Naive thymus-derived CD4-positive, alpha-beta T cell (primary cell): ENCODE measurements at regions of chr6 and their contacts with region 1.

Region 1: DNA sequence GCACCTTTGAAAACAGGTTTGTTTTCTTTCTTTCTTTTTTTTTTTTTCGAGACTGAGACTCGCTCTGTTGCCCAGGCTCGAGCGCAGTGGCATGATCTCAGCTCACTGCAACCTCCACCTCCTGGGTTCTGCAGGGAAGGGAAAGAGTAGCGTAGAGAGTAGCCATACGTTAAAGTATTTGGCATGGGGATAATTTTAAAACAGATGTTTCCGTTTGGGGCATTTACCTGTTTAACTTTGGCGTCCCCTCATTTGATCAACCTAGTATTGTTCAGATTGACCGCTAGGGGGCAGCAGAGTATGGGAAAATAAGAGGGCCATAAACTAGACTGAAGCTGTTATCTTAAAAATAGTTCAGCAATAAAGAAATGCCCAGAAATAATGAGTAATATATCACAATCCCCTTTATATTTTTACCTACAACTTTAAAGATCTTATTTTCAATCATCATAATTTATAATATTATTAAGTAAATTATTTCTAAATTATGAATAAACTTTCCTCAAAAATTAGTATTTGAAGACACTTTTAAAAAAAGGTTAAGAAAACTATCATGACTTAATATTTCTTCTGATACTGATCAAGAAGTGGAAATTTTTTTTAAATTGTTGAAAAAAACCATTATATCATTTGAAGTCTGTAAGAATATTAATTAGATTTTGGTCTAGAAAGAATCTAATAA is 7.6 kb upstream of the TAAR9 start:
- DNase-seq: peak; percentile 26 to 70 (median 54)
- ATAC-seq: peak; percentile 85
- H3K4me3 ChIP-seq: no peak overlapping the region
- H3K4me3 Mint-ChIP-seq: peak overlapping the region in 3 of 10 donors; percentile 5 to 66 (median 32)
- H3K27ac ChIP-seq: no peak overlapping the region
- H3K27ac Mint-ChIP-seq: no peak overlapping the region
- H3K4me1 ChIP-seq: no peaks in the 10 kb centered on the region
- H3K4me1 Mint-ChIP-seq: peaks cover 0 to 3% (median 0%) of the 10 kb centered on the region in 7 donors
- H3K27me3 ChIP-seq: no peaks in the 10 kb centered on the region
- H3K27me3 Mint-ChIP-seq: peaks cover 6 to 29% (median 18%) of the 10 kb centered on the region in 5 donors

Region 2: GRCh38 chr6:132633362-132633761 is 102.9 kb after region 1 on chr6:
- CTCF ChIA-PET with region 1: no interaction called
- POLR2A ChIA-PET with region 1: no interaction called
- intact Hi-C with region 1: no loop called
- DNase-seq: no peak
- ATAC-seq: no peak
- H3K4me3 ChIP-seq: no peak overlapping the region
- H3K4me3 Mint-ChIP-seq: no peak overlapping the region
- H3K27ac ChIP-seq: no peak overlapping the region
- H3K27ac Mint-ChIP-seq: no peak overlapping the region
- H3K4me1 ChIP-seq: no peaks in the 10 kb centered on the region
- H3K4me1 Mint-ChIP-seq: no peaks in the 10 kb centered on the region
- H3K27me3 ChIP-seq: no peaks in the 10 kb centered on the region
- H3K27me3 Mint-ChIP-seq: peaks cover 32 to 55% (median 53%) of the 10 kb centered on the region in 5 donors

Region 3: DNA sequence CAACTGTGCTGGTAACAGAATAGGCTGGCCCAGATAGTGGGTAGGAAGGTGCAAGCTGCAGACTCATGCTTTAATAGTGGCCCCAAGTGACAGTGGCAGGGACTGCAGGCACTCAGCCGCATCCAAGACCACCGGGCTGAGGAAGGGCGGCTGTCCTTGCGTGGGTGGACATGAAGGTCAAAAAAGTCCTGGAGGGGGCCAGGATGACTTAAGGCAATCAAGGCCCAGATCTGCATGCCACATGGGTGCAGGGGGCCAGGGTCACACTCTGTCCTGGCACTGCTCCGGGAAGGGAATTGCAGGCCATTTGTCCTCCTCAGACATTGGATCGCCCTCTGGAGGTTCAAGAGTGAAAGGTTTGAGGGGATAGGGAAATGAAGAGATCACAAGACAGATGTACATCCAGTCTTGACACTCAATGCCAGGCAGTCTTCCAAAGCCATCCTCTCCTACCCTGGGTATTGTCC is 237.7 kb after region 1 on chr6:
- CTCF ChIA-PET with region 1: no interaction called
- POLR2A ChIA-PET with region 1: no interaction called
- intact Hi-C with region 1: loop called (anchors 1 kb)
- DNase-seq: peak in 6 of 9 donors; percentile 7 to 23 (median 11)
- ATAC-seq: peak; percentile 79
- H3K4me3 ChIP-seq: no peak overlapping the region
- H3K4me3 Mint-ChIP-seq: no peak overlapping the region
- H3K27ac ChIP-seq: no peak overlapping the region
- H3K27ac Mint-ChIP-seq: peak overlapping the region in 2 of 9 donors; percentile 14 to 40
- H3K4me1 ChIP-seq: peaks cover 8 to 9% of the 10 kb centered on the region in 2 donors
- H3K4me1 Mint-ChIP-seq: peaks cover 13 to 20% (median 15%) of the 10 kb centered on the region in 7 donors
- H3K27me3 ChIP-seq: no peaks in the 10 kb centered on the region
- H3K27me3 Mint-ChIP-seq: peaks cover 0 to 2% (median 0%) of the 10 kb centered on the region in 5 donors

Region 4: DNA sequence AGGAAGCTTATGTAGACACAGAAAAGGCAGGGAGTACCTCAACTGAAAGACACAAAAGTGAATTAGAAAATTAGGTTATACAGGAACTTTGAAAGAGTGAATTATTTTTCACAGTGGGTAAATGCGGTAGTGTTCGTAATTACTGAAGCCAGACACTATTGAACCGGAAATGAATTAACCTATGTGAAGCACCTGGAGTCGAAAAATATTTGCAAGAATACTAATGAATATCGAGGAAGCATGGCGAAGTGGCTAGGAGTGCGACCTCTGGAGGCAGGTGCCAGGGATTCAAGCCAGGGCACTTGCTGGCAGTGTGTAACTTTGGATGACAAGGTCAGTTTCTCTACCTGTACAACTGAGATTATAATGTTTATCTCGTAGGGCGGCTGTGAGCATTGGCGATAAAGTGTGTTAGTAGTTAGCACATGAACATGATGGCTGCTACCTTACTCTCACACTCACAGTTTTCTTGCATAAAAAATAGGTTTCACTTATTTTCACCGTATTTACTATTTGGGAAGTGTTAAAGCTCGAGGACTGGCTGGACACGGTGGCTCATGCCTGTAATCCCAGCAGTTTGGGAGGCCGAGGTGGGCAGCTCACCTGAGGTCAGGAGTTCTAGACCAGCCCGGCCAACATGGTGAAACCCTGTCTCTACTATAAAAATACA is 268.6 kb after region 1 on chr6:
- CTCF ChIA-PET with region 1: no interaction called
- POLR2A ChIA-PET with region 1: no interaction called
- intact Hi-C with region 1: loop called (anchors 1 kb)
- DNase-seq: peak; percentile 35 to 70 (median 64)
- ATAC-seq: peak; percentile 91
- H3K4me3 ChIP-seq: no peak overlapping the region
- H3K4me3 Mint-ChIP-seq: no peak overlapping the region
- H3K27ac ChIP-seq: no peak overlapping the region
- H3K27ac Mint-ChIP-seq: peak overlapping the region in 1 of 9 donors; percentile 87
- H3K4me1 ChIP-seq: no peaks in the 10 kb centered on the region
- H3K4me1 Mint-ChIP-seq: peaks cover 6 to 49% (median 40%) of the 10 kb centered on the region in 7 donors
- H3K27me3 ChIP-seq: no peaks in the 10 kb centered on the region
- H3K27me3 Mint-ChIP-seq: peaks cover 0 to 12% (median 0%) of the 10 kb centered on the region in 5 donors

Region 5: GRCh38 chr6:132830334-132830751 is 299.9 kb after region 1 on chr6:
- CTCF ChIA-PET with region 1: no interaction called
- POLR2A ChIA-PET with region 1: no interaction called
- intact Hi-C with region 1: loop called in 1 of 2 experiments (anchors 2 kb)
- DNase-seq: no peak
- ATAC-seq: no peak
- H3K4me3 ChIP-seq: no peak overlapping the region
- H3K4me3 Mint-ChIP-seq: no peak overlapping the region
- H3K27ac ChIP-seq: no peak overlapping the region
- H3K27ac Mint-ChIP-seq: no peak overlapping the region
- H3K4me1 ChIP-seq: no peaks in the 10 kb centered on the region
- H3K4me1 Mint-ChIP-seq: no peaks in the 10 kb centered on the region
- H3K27me3 ChIP-seq: no peaks in the 10 kb centered on the region
- H3K27me3 Mint-ChIP-seq: peaks cover 0 to 6% (median 0%) of the 10 kb centered on the region in 5 donors

Region 6: DNA sequence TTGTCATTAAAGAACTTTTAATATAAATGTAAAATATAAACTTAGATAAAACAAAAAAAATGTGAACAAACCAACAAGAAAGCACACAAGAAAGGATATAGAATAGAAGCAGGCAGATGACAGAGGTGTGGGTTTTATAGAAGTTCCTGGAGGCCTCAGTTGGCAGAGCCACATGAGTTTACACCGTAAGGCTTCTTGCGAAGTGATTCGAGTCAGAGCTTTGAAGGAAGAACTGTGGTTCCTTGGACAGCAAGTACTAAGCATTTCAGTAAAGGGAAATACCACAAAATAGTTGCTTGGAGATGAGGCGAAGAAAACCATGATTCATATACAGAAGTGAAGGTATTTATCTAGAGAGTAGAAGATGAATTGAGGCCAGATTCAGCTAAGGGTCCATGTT is 502.8 kb after region 1 on chr6:
- CTCF ChIA-PET with region 1: no interaction called
- POLR2A ChIA-PET with region 1: no interaction called
- intact Hi-C with region 1: no loop called
- DNase-seq: no peak
- ATAC-seq: no peak
- H3K4me3 ChIP-seq: no peak overlapping the region
- H3K4me3 Mint-ChIP-seq: no peak overlapping the region
- H3K27ac ChIP-seq: no peak overlapping the region
- H3K27ac Mint-ChIP-seq: no peak overlapping the region
- H3K4me1 ChIP-seq: no peaks in the 10 kb centered on the region
- H3K4me1 Mint-ChIP-seq: no peaks in the 10 kb centered on the region
- H3K27me3 ChIP-seq: no peaks in the 10 kb centered on the region
- H3K27me3 Mint-ChIP-seq: peaks cover 0 to 16% (median 3%) of the 10 kb centered on the region in 5 donors

Region 7: GRCh38 chr6:133377219-133377618 is 846.8 kb after region 1 on chr6:
- CTCF ChIA-PET with region 1: no interaction called
- POLR2A ChIA-PET with region 1: no interaction called
- intact Hi-C with region 1: no loop called
- DNase-seq: no peak
- ATAC-seq: no peak
- H3K4me3 ChIP-seq: no peak overlapping the region
- H3K4me3 Mint-ChIP-seq: no peak overlapping the region
- H3K27ac ChIP-seq: no peak overlapping the region
- H3K27ac Mint-ChIP-seq: no peak overlapping the region
- H3K4me1 ChIP-seq: no peaks in the 10 kb centered on the region
- H3K4me1 Mint-ChIP-seq: no peaks in the 10 kb centered on the region
- H3K27me3 ChIP-seq: no peaks in the 10 kb centered on the region
- H3K27me3 Mint-ChIP-seq: peaks cover 0 to 12% (median 5%) of the 10 kb centered on the region in 5 donors

Region 8: DNA sequence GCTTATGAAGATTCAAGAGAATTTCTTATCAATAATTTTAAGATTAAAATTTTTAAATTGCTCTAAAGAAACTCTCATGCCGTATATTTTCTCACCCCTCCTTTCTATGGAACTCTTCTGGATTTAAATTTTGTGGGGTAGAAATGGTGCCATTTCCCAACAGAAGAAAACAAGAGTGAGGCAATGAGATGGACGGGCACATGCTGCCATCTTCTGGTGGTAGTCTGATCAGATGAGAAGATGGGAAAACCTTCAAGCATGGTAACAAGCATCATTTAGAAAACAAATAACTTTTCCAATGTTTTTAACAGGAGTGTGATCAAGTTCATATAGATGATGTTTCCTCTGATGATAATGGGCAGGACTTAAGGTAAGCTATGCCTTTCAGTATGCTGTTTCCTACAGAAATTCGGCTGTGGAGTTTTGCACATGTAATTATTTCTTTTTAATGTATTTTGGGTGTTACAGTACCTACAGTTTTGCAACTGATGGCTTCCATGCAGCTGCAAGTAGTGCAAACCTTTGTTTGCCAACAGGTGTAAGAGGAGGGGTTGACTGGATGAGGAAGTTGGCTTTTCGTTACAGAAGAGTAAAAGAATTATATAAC is 982.1 kb after region 1 on chr6:
- CTCF ChIA-PET with region 1: no interaction called
- POLR2A ChIA-PET with region 1: no interaction called
- intact Hi-C with region 1: loop called in 1 of 2 experiments (anchors 2 kb)
- DNase-seq: peak in 2 of 9 donors; percentile 4 to 13
- ATAC-seq: no peak
- H3K4me3 ChIP-seq: no peak overlapping the region
- H3K4me3 Mint-ChIP-seq: no peak overlapping the region
- H3K27ac ChIP-seq: no peak overlapping the region
- H3K27ac Mint-ChIP-seq: no peak overlapping the region
- H3K4me1 ChIP-seq: no peaks in the 10 kb centered on the region
- H3K4me1 Mint-ChIP-seq: no peaks in the 10 kb centered on the region
- H3K27me3 ChIP-seq: no peaks in the 10 kb centered on the region
- H3K27me3 Mint-ChIP-seq: peaks cover 3 to 28% (median 15%) of the 10 kb centered on the region in 5 donors

Region 9: GRCh38 chr6:133916650-133917151 is 1386.3 kb after region 1 on chr6:
- CTCF ChIA-PET with region 1: interaction called, 3 read pairs
- POLR2A ChIA-PET with region 1: no interaction called
- intact Hi-C with region 1: loop called in 1 of 2 experiments (anchors 1 kb)
- DNase-seq: peak; percentile 15 to 74 (median 49)
- ATAC-seq: peak; percentile 81
- H3K4me3 ChIP-seq: no peak overlapping the region
- H3K4me3 Mint-ChIP-seq: peak overlapping the region in 5 of 10 donors; percentile 3 to 54 (median 10)
- H3K27ac ChIP-seq: no peak overlapping the region
- H3K27ac Mint-ChIP-seq: no peak overlapping the region
- H3K4me1 ChIP-seq: no peaks in the 10 kb centered on the region
- H3K4me1 Mint-ChIP-seq: peaks cover 0 to 5% (median 4%) of the 10 kb centered on the region in 7 donors
- H3K27me3 ChIP-seq: peaks cover 0 to 4% of the 10 kb centered on the region in 2 donors
- H3K27me3 Mint-ChIP-seq: peaks cover 18 to 45% (median 29%) of the 10 kb centered on the region in 5 donors

Region 10: DNA sequence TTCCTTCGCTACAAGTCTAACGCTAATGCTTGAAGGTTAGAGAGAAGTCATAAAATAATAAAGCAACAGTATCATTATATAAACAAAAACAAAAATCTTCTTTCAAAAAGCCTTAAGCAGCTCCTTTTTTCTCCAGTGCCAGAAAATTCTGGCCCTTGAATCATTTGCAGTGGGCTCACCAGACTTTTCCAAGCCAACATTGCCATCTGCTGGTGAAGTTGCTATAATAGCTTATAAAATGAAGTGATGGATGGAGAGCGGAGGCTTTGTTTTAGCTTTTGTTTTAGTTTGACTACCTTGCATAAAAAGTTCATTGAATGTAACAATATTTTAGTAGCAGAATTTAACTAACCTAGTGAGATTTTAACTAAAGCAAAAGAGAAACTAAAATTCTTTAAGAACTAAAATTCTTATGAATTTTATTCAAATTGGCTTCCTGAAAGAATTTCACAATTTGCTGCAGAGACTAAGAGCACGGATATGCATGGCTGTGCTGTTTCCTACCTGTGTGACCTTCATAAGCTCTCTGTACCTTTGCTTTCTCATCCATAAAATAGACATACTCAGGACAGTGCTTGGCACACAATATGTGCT is 1566.8 kb after region 1 on chr6:
- CTCF ChIA-PET with region 1: no interaction called
- POLR2A ChIA-PET with region 1: no interaction called
- intact Hi-C with region 1: loop called in 1 of 2 experiments (anchors 1 kb)
- DNase-seq: peak in 8 of 9 donors; percentile 26 to 70 (median 54)
- ATAC-seq: peak; percentile 68
- H3K4me3 ChIP-seq: no peak overlapping the region
- H3K4me3 Mint-ChIP-seq: no peak overlapping the region
- H3K27ac ChIP-seq: no peak overlapping the region
- H3K27ac Mint-ChIP-seq: no peak overlapping the region
- H3K4me1 ChIP-seq: no peaks in the 10 kb centered on the region
- H3K4me1 Mint-ChIP-seq: peaks cover 0 to 6% (median 0%) of the 10 kb centered on the region in 7 donors
- H3K27me3 ChIP-seq: peaks cover 0 to 3% of the 10 kb centered on the region in 2 donors
- H3K27me3 Mint-ChIP-seq: peaks cover 13 to 31% (median 20%) of the 10 kb centered on the region in 5 donors